ENCODE measurements at regions of chr5 and their contacts with region 1.

Region 1: GRCh38 chr5:66987949-66988838 is 208.4 kb downstream of the CD180 start:
- DNase-seq: peak in 4 of 5 donors; percentile 32 to 39 (median 36)
- H3K4me3 ChIP-seq: no peak overlapping the region
- H3K4me3 Mint-ChIP-seq: no peak overlapping the region
- H3K27ac ChIP-seq: no peak overlapping the region
- H3K27ac Mint-ChIP-seq: peak overlapping the region in 1 of 7 donors; percentile 48
- H3K4me1 ChIP-seq: peaks cover 3% of the 10 kb centered on the region
- H3K4me1 Mint-ChIP-seq: peaks cover 0 to 4% (median 2%) of the 10 kb centered on the region in 4 donors
- H3K27me3 ChIP-seq: no peaks in the 10 kb centered on the region
- H3K27me3 Mint-ChIP-seq: no peaks in the 10 kb centered on the region

Region 2: DNA sequence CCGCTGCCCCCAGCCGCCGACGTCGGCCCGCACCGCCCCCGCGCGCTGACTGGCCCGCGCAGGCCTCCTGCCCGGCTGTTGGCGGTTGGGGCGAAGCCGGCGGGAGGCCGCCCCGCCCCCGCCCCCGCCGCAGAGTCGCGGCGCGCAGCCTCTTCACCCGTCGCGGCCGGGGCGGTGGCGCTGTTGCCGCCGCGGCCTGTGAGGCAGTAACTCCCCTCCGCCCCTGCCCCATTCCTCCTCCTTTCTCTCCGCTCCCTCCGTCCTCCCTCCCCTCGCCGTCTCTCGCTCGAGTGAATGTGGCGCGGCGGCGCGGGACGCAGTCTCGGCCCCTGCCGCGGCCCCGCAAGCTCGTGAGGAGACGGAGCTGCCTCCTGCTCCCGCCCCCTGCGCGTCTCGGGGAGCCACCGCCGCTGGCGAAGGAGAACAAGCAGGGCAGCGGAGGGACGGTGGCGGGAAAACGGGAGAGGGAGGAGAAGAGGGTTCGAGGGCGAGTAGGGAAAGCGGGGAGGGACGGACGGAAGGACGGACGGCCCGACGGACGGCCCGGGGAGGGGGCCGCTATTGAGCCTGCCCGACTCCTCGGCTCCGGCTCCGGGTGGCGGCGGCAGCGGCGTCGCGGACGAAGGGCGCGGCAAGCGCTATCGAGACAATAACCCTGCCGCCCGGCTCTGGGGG is 1062.5 kb before region 1 on chr5:
- CTCF ChIA-PET with region 1: no interaction called
- POLR2A ChIA-PET with region 1: no interaction called
- intact Hi-C with region 1: no loop called
- DNase-seq: peak; percentile 83 to 88 (median 84)
- H3K4me3 ChIP-seq: peak overlapping the region in 1 of 2 donors; percentile 80
- H3K4me3 Mint-ChIP-seq: peak overlapping the region; percentile 85 to 98 (median 91)
- H3K27ac ChIP-seq: peak overlapping the region; percentile 95
- H3K27ac Mint-ChIP-seq: peak overlapping the region; percentile 90 to 99 (median 95)
- H3K4me1 ChIP-seq: peaks cover 39% of the 10 kb centered on the region
- H3K4me1 Mint-ChIP-seq: peaks cover 15 to 62% (median 32%) of the 10 kb centered on the region in 4 donors
- H3K27me3 ChIP-seq: no peaks in the 10 kb centered on the region
- H3K27me3 Mint-ChIP-seq: no peaks in the 10 kb centered on the region

Region 3: DNA sequence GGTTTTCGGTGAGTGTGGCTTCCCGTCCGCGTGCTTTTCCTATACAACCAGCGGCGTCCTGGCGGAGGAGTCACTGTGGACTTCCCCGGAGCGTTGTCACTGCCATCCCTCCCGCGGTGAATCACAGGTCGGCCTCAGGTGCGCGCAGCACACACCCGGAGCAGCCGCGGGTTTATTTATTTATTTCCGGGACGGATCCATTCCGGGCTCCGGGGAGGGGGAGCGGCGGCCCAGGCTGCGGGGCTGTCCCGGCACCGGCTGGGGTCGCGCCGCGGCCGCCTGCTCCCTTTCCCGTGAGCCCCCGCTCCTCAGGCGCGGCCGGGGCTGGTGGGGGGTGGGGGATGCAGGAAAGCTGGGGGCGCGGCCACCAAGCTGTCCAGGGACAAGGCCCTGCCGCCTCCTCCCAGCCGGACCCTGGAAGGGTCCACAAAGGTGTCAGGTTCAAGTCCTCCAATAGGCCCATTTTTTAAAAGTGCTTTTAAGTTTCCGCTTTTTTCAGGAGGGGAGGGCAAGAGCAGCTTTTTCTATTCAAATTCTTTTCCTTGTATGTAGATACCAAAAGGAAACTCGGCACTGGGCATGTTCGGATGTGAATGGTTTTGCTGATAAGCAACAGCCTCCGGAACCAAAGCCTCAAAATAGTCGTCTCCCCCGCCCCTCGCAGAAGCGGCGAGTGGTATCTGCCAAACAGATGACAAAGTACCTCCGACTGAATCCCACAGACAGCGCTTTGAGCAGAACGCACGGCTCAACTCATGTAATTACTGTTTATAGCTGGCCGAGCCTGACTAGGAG is 15.9 kb after region 1 on chr5:
- CTCF ChIA-PET with region 1: interaction called, 7 read pairs
- POLR2A ChIA-PET with region 1: no interaction called
- intact Hi-C with region 1: loop called (anchors 1 kb)
- DNase-seq: peak; percentile 88 to 96 (median 90)
- H3K4me3 ChIP-seq: peak overlapping the region; percentile 81 to 83
- H3K4me3 Mint-ChIP-seq: peak overlapping the region; percentile 89 to 99 (median 98)
- H3K27ac ChIP-seq: peak overlapping the region; percentile 82
- H3K27ac Mint-ChIP-seq: peak overlapping the region; percentile 95 to 99 (median 98)
- H3K4me1 ChIP-seq: peaks cover 55% of the 10 kb centered on the region
- H3K4me1 Mint-ChIP-seq: peaks cover 40 to 58% (median 50%) of the 10 kb centered on the region in 4 donors
- H3K27me3 ChIP-seq: no peaks in the 10 kb centered on the region
- H3K27me3 Mint-ChIP-seq: no peaks in the 10 kb centered on the region

Region 4: GRCh38 chr5:67038817-67039603 is 50.8 kb after region 1 on chr5:
- CTCF ChIA-PET with region 1: interaction called, 3 read pairs
- POLR2A ChIA-PET with region 1: interaction called, 4 read pairs
- intact Hi-C with region 1: loop called (anchors 10 kb)
- DNase-seq: no peak
- H3K4me3 ChIP-seq: no peak overlapping the region
- H3K4me3 Mint-ChIP-seq: peak overlapping the region in 1 of 8 donors; percentile 25
- H3K27ac ChIP-seq: no peak overlapping the region
- H3K27ac Mint-ChIP-seq: no peak overlapping the region
- H3K4me1 ChIP-seq: no peaks in the 10 kb centered on the region
- H3K4me1 Mint-ChIP-seq: peaks cover 0 to 5% (median 2%) of the 10 kb centered on the region in 4 donors
- H3K27me3 ChIP-seq: no peaks in the 10 kb centered on the region
- H3K27me3 Mint-ChIP-seq: no peaks in the 10 kb centered on the region

Region 5: DNA sequence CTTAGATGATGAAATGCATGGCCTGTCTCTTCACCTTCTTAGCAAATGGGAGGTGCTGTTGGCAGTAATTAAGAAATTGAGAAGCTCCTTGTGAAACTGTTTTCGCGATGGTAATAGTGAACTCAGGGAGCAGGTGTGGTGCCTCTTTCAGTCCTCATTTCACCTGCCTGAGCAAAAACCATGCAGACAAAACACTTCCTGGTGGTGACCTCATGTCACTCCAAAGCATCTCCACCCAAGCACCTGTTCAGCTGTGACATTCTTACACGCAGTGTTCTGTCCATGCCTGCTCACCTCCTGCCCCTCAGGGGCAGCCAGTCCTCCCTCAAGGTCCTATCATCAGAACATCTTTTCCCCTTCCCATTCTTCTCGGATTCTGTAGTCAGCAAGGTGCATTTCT is 61.9 kb after region 1 on chr5:
- CTCF ChIA-PET with region 1: interaction called, 4 read pairs
- POLR2A ChIA-PET with region 1: no interaction called
- intact Hi-C with region 1: loop called (anchors 5 kb)
- DNase-seq: no peak
- H3K4me3 ChIP-seq: no peak overlapping the region
- H3K4me3 Mint-ChIP-seq: no peak overlapping the region
- H3K27ac ChIP-seq: no peak overlapping the region
- H3K27ac Mint-ChIP-seq: peak overlapping the region in 3 of 7 donors; percentile 2 to 35 (median 25)
- H3K4me1 ChIP-seq: no peaks in the 10 kb centered on the region
- H3K4me1 Mint-ChIP-seq: peaks cover 6 to 17% (median 13%) of the 10 kb centered on the region in 4 donors
- H3K27me3 ChIP-seq: no peaks in the 10 kb centered on the region
- H3K27me3 Mint-ChIP-seq: no peaks in the 10 kb centered on the region

Region 6: GRCh38 chr5:67100301-67100700 is 112.1 kb after region 1 on chr5:
- CTCF ChIA-PET with region 1: no interaction called
- POLR2A ChIA-PET with region 1: no interaction called
- intact Hi-C with region 1: loop called (anchors 10 kb)
- DNase-seq: peak in 2 of 5 donors; percentile 1 to 3
- H3K4me3 ChIP-seq: no peak overlapping the region
- H3K4me3 Mint-ChIP-seq: peak overlapping the region in 4 of 8 donors; percentile 7 to 47 (median 38)
- H3K27ac ChIP-seq: no peak overlapping the region
- H3K27ac Mint-ChIP-seq: peak overlapping the region in 2 of 7 donors; percentile 4 to 39
- H3K4me1 ChIP-seq: no peaks in the 10 kb centered on the region
- H3K4me1 Mint-ChIP-seq: peaks cover 4 to 11% (median 7%) of the 10 kb centered on the region in 4 donors
- H3K27me3 ChIP-seq: no peaks in the 10 kb centered on the region
- H3K27me3 Mint-ChIP-seq: no peaks in the 10 kb centered on the region

Region 7: GRCh38 chr5:67156976-67157583 is 168.9 kb after region 1 on chr5:
- CTCF ChIA-PET with region 1: interaction called, 5 read pairs
- POLR2A ChIA-PET with region 1: no interaction called
- intact Hi-C with region 1: loop called (anchors 2 kb)
- DNase-seq: peak; percentile 58 to 64 (median 61)
- H3K4me3 ChIP-seq: no peak overlapping the region
- H3K4me3 Mint-ChIP-seq: peak overlapping the region in 4 of 8 donors; percentile 8 to 55 (median 45)
- H3K27ac ChIP-seq: no peak overlapping the region
- H3K27ac Mint-ChIP-seq: peak overlapping the region; percentile 47 to 88 (median 83)
- H3K4me1 ChIP-seq: peaks cover 55% of the 10 kb centered on the region
- H3K4me1 Mint-ChIP-seq: peaks cover 43 to 58% (median 51%) of the 10 kb centered on the region in 4 donors
- H3K27me3 ChIP-seq: no peaks in the 10 kb centered on the region
- H3K27me3 Mint-ChIP-seq: no peaks in the 10 kb centered on the region